ENCODE measurements at regions of chr16 and their contacts with region 1.

Region 1: GRCh38 chr16:86563489-86564345 is 2.9 kb upstream of the FOXC2 start:
- DNase-seq: peak; percentile 90
- ATAC-seq: peak; percentile 71

Region 2: DNA sequence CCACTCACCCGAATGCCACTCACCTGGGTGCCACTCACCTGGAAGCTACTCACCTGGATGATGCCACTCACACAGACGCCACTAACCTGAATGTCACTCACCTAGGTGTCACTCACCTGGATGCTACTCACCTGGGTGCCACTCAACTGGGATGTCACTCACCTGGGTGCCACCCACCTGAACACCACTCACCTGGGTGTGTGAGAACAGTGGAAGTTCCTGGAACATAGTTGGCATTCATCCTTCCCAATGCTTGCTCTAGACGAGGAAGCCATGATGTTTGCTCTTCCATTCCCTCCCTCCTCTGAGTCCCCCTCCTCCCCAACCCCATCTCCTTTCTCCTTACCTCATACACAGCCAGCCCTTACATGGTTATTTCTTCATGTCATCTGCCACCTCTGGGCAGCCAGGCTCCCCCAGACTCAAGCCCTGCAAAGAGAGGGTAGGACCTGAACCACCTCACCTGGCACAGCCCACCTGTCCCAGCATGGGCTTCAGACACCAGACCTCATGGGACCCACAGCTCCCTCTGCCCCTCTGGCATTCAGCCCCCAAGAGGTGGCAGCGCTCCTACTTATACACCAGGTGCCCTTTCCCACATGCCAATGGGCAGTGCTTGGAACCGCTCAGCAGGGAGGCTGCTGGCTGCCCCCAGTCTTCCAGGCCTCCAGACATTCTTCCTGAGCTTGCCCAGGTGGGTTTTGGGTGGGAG is 225.2 kb before region 1 on chr16:
- intact Hi-C with region 1: no loop called
- DNase-seq: no peak
- ATAC-seq: no peak

Region 3: DNA sequence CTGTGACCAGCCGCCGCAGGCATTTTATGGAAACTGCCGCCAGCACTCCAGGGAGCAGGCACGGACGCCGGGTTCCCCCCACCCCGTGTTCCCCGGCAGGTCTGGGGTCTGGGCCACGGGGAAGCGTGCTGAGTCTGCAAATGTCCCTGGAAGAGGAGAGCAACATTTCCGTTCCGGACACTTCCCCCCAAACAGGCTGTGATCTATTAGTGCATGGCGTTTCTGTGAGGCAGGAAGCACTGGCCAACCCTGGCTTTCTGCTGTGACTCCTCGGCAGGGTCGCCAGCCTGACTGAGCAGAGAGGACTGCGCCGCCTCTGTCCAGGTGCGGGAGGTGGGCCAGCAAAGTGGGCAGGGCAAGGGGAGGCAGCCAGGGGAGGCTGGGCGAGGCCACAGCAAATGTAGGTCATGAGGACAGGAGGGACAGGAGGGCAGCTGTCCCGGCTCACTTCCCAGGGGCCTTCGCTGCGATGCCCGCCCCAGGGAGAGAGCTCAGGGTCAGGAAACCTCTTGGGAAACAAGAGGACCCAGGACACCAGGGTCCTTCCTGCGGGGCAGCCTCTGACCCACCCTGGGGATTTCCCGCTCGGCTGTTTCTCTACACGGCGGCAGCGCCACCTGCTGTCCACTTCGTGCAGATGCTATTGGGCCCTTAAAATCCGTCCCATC is 43.9 kb before region 1 on chr16:
- intact Hi-C with region 1: no loop called
- DNase-seq: peak; percentile 78
- ATAC-seq: peak; percentile 61

Region 4: GRCh38 chr16:87278191-87279095 is 714.7 kb after region 1 on chr16:
- intact Hi-C with region 1: loop called (anchors 5 kb)
- DNase-seq: peak; percentile 86
- ATAC-seq: peak; percentile 98